ENCODE measurements at regions of chr3 and their contacts with region 1.

Region 1: GRCh38 chr3:71232175-71232679 is 351.3 kb downstream of the FOXP1 start:
- DNase-seq: peak; percentile 42
- H3K4me3 Mint-ChIP-seq: peak overlapping the region; percentile 2
- H3K27ac Mint-ChIP-seq: peak overlapping the region; percentile 57
- H3K4me1 Mint-ChIP-seq: peaks cover 78% of the 10 kb centered on the region
- H3K27me3 Mint-ChIP-seq: no peaks in the 10 kb centered on the region

Region 2: DNA sequence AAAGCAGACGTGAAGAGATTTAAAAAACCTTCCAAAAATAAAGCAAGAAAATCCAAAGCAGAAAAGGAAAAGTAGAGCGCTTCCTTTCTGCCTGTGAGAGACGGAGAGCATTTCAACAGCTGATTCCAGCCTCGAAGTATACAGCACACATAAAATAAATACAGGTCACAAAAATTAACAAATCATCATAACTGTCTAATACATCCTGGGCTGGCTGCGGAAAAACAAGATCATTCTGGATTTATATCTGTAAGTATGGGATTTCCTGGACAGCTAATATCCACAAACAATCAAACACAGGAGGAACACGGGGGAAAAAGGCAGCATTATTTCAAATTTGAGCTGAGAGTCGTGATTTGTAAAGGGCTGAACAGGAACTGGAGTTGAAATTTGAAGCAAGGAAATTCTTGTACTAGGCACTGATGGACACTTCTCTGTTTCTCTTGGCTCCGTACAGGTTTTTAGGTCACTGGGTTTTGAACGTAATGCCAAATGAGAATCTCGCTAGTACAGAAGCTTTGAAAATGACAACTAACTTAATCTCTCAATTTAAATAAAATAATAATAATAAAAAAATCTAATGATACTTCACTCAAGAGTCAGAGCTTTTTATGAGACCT is 226.4 kb before region 1 on chr3:
- CTCF ChIA-PET with region 1: no interaction called
- intact Hi-C with region 1: no loop called
- DNase-seq: no peak
- H3K4me3 Mint-ChIP-seq: no peak overlapping the region
- H3K27ac Mint-ChIP-seq: peak overlapping the region; percentile 56
- H3K4me1 Mint-ChIP-seq: peaks cover 77% of the 10 kb centered on the region
- H3K27me3 Mint-ChIP-seq: no peaks in the 10 kb centered on the region

Region 3: DNA sequence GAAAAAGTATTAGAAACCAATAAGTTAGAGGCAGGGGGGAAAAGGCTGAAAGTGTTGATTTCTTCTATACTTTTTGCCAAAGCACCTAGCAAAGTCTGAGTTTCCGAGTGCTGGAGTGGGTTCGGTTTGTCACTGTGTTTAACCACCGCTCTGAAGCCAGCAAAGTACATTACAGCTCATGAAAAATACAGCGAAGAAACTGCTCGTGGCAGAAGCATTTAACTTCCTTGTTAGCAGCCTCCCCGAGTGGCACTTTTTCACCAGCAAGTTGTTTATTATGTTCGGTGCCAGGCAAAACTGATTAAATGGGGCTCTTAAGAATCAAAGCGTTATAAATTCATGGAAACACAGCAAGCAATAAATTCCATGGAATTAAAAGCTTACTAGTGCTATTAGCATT is 37.7 kb after region 1 on chr3:
- CTCF ChIA-PET with region 1: interaction called, 3 read pairs
- intact Hi-C with region 1: loop called (anchors 2 kb)
- DNase-seq: peak; percentile 31
- H3K4me3 Mint-ChIP-seq: peak overlapping the region; percentile 55
- H3K27ac Mint-ChIP-seq: peak overlapping the region; percentile 62
- H3K4me1 Mint-ChIP-seq: peaks cover 73% of the 10 kb centered on the region
- H3K27me3 Mint-ChIP-seq: no peaks in the 10 kb centered on the region

Measured in activated naive CD4-positive, alpha-beta T cell treated with anti-CD3 and anti-CD28 coated beads for 36 hours (primary cell).